ENCODE measurements at regions of chr17 and their contacts with region 1.

Region 1: GRCh38 chr17:51764387-51764972 is 394.0 kb downstream of the CA10 start:
- H3K4me3 ChIP-seq: no peak overlapping the region
- H3K27ac ChIP-seq: no peak overlapping the region
- H3K4me1 ChIP-seq: no peaks in the 10 kb centered on the region
- CTCF ChIP-seq: peak; percentile 83

Region 2: GRCh38 chr17:51585514-51586104 is 178.9 kb before region 1 on chr17:
- CTCF ChIA-PET with region 1: interaction called, 10 read pairs
- POLR2A ChIA-PET with region 1: no interaction called
- H3K4me3 ChIP-seq: no peak overlapping the region
- H3K27ac ChIP-seq: no peak overlapping the region
- H3K4me1 ChIP-seq: no peaks in the 10 kb centered on the region
- CTCF ChIP-seq: peak; percentile 64

Region 3: DNA sequence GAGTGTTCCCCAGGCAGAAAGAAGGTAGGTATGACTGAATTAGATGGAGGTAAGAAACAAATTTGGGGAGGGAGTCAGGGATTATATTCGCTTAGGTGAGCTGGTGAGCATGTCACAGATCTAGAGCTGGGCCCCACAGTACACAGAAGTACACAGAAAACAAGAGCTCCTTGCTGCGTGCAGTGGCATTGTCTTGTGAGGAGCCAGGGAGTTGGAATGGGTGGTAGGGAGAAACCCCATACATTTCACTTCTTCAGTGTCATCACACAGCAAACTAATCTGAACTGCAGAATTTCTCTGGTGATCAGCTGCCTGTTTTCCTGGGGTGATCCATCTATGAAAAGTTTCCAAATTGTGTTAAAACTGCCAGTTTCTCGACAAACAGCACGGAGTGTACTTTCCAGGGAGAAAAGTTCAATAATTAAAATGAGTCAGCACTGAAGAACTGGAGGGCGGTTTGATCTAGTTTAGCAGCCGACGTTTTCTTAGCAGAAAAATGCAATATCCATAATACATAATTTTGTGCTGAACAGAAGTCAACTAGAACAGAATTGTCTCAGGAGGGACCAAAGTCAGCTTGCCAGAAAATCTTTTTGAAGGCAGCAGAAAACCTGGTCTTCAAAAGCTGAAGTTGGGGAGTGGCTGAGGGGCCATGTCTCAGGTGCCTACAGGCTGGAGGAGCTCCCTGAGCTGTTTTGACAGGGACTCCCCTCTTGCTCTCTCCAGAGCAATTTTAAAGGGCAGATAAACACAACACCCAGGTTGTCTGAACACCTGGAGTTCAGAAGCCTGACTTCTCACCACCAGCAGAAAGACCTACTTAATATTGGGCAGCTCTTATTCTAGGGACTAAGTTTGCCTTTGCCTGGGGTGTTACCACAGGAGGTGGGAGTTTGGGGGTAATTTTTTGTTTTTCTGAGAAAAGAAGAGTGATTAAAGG is 54.5 kb before region 1 on chr17:
- CTCF ChIA-PET with region 1: interaction called, 20 read pairs
- POLR2A ChIA-PET with region 1: no interaction called
- H3K4me3 ChIP-seq: no peak overlapping the region
- H3K27ac ChIP-seq: no peak overlapping the region
- H3K4me1 ChIP-seq: peaks cover 23% of the 10 kb centered on the region
- CTCF ChIP-seq: no peak

Region 4: GRCh38 chr17:51745979-51746378 is 18.5 kb before region 1 on chr17:
- CTCF ChIA-PET with region 1: interaction called, 73 read pairs
- POLR2A ChIA-PET with region 1: no interaction called
- H3K4me3 ChIP-seq: no peak overlapping the region
- H3K27ac ChIP-seq: peak overlapping the region; percentile 6; the same call in 1 of the 2 replicates
- H3K4me1 ChIP-seq: peaks cover 28% of the 10 kb centered on the region
- CTCF ChIP-seq: no peak

Region 5: DNA sequence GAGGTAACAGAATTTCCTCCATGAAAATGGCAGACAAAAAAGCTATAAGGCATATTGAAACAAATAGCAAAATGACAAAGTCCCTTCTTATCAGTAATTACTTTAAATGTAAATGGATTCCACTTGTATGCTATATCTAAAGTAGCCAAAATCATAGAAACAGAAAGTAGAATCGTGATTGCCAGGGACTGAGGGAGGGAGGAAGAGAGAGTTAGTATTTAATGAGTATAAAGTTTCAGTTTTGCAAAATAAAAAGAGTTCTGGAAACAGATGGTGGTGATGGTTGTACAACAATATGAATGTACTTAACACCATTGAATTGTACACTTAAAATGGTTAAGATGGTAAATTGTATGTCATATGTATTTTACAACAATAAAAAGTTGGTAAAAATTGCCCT is 13.4 kb before region 1 on chr17:
- CTCF ChIA-PET with region 1: interaction called, 73 read pairs
- POLR2A ChIA-PET with region 1: no interaction called
- H3K4me3 ChIP-seq: no peak overlapping the region
- H3K27ac ChIP-seq: no peak overlapping the region
- H3K4me1 ChIP-seq: peaks cover 5% of the 10 kb centered on the region; the same call in 1 of the 2 replicates
- CTCF ChIP-seq: no peak

Region 6: DNA sequence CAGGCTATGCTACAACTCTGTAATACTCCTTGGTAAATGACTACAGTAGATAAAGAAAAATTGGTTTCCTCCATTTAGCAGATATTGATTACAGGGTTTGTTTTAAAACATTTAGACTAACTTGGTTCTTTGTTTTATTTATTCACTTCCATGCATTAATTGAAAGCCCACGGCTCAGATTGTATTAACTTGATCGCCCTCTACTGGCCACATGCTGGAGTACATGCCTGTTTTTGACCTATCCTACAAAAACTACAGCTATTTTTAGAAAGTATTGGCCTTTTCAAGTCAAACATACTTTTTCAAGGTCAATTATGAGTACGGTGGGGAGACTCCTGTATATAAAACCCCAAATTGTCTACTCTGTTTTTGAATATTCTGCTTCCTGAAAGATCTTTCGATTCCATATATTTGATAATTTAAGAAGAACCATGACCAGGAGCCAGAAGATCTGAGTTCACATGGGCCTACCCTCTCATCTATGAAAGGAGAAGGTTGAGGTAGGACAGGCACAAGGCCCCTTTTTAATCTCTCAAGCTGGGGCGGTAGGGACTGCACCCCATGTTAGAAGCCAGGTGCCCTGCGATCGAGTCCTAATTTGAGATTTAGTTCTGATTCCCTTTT is 342.3 kb after region 1 on chr17:
- CTCF ChIA-PET with region 1: interaction called, 66 read pairs
- POLR2A ChIA-PET with region 1: no interaction called
- H3K4me3 ChIP-seq: no peak overlapping the region
- H3K27ac ChIP-seq: no peak overlapping the region
- H3K4me1 ChIP-seq: no peaks in the 10 kb centered on the region
- CTCF ChIP-seq: no peak

Measured in HEK293 (cell line).